Calu3 (cell line): ENCODE measurements at regions of chr21 and their contacts with region 1.

Region 1: GRCh38 chr21:34889716-34890469 is 159.2 kb downstream of the RUNX1 start:
- DNase-seq: peak; percentile 84
- H3K4me3 Mint-ChIP-seq: peak overlapping the region; percentile 65
- H3K27ac Mint-ChIP-seq: peak overlapping the region; percentile 66
- H3K4me1 Mint-ChIP-seq: no peaks in the 10 kb centered on the region
- H3K27me3 Mint-ChIP-seq: no peaks in the 10 kb centered on the region
- CTCF ChIP-seq: peak; percentile 63

Region 2: DNA sequence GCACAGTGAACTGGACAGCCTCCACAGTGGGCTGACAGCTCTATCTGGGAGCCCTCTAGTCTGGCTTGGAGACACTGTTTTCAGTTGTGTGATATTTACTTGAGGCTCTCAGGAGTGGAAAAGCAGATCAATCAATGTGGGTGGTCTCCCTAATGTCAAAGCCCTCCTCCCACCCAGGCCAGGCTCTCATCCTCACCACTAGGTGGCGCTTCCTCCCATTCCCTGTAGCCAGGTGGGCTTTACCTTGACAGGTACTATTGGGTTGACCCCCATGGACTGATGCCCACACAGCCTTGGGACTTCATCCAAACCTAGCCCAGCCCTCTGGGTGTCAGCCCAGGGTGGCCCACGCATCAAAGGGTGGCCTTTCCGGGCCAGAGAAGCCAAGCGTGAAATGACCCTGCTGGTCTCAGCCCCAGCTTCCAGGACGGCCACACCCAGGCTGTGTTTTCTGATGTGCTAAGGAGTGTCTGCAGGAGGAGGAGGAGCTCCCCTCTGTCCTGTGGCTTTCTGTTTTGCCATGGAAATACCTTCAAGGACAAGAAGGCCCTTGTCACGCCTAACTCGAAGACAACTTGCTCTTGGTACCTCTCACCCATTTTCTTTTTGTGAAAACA is 167.1 kb before region 1 on chr21:
- CTCF ChIA-PET with region 1: no interaction called
- intact Hi-C with region 1: no loop called
- DNase-seq: peak; percentile 17
- H3K4me3 Mint-ChIP-seq: no peak overlapping the region
- H3K27ac Mint-ChIP-seq: no peak overlapping the region
- H3K4me1 Mint-ChIP-seq: no peaks in the 10 kb centered on the region
- H3K27me3 Mint-ChIP-seq: no peaks in the 10 kb centered on the region
- CTCF ChIP-seq: peak; percentile 57

Region 3: DNA sequence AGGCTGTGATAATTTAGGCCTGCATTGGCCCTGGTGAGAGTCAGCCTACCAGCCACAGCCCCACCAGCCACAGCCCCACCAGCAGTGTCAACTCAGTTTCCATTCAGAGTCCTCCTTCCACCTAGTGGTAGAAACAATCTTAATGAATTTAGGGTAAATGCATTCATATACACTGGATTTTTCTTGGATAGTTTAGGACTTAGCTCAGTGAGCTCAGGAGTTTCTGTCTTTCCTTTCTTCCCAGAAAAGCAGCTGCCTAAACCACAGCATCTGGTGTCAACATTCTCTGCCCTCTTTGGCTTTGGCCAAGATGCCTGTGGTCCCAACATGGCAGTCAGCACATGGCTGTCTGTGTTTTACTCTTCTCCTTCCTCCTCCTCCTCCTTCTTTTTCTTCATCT is 127.1 kb before region 1 on chr21:
- CTCF ChIA-PET with region 1: no interaction called
- intact Hi-C with region 1: no loop called
- DNase-seq: no peak
- H3K4me3 Mint-ChIP-seq: no peak overlapping the region
- H3K27ac Mint-ChIP-seq: no peak overlapping the region
- H3K4me1 Mint-ChIP-seq: no peaks in the 10 kb centered on the region
- H3K27me3 Mint-ChIP-seq: no peaks in the 10 kb centered on the region
- CTCF ChIP-seq: no peak

Region 4: DNA sequence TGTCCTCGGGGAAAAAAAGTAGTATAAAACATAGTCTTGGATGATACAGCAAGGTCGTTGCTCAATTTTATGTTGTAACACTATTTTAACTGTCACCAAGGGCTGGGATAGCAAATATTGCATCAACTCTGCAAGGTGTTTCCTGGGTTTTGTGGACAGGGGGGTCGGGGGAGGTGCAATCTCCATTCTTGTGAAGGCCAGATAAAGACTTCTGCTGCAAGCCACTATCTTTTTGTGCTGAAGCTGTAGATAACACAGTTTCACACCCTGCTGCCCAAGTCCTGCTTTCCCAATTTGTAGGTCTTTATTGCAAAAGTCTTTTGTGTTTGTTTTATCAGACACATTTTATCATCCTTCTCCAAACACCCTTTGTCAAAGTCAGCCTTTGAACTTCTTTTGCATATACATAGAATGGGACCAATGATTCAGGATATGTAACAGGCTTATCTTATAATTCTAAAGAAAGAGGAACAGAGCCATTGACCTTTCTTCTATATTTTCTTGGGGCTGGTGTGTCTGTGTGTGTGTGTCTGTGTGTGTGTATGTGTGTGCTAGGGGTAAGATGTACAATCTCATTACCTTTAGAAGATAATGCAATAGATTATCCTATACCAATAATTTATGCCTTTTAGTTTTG is 18.6 kb after region 1 on chr21:
- CTCF ChIA-PET with region 1: no interaction called
- intact Hi-C with region 1: no loop called
- DNase-seq: peak; percentile 13
- H3K4me3 Mint-ChIP-seq: no peak overlapping the region
- H3K27ac Mint-ChIP-seq: no peak overlapping the region
- H3K4me1 Mint-ChIP-seq: peaks cover 26% of the 10 kb centered on the region
- H3K27me3 Mint-ChIP-seq: no peaks in the 10 kb centered on the region
- CTCF ChIP-seq: no peak

Region 5: GRCh38 chr21:35138665-35139381 is 248.9 kb after region 1 on chr21:
- CTCF ChIA-PET with region 1: interaction called, 7 read pairs
- intact Hi-C with region 1: loop called (anchors 5 kb)
- DNase-seq: peak; percentile 78
- H3K4me3 Mint-ChIP-seq: no peak overlapping the region
- H3K27ac Mint-ChIP-seq: peak overlapping the region; percentile 95
- H3K4me1 Mint-ChIP-seq: peaks cover 39% of the 10 kb centered on the region
- H3K27me3 Mint-ChIP-seq: no peaks in the 10 kb centered on the region
- CTCF ChIP-seq: no peak

Region 6: GRCh38 chr21:35217504-35218060 is 327.7 kb after region 1 on chr21:
- CTCF ChIA-PET with region 1: no interaction called
- intact Hi-C with region 1: loop called (anchors 10 kb)
- DNase-seq: peak; percentile 79
- H3K4me3 Mint-ChIP-seq: no peak overlapping the region
- H3K27ac Mint-ChIP-seq: peak overlapping the region; percentile 95
- H3K4me1 Mint-ChIP-seq: peaks cover 46% of the 10 kb centered on the region
- H3K27me3 Mint-ChIP-seq: no peaks in the 10 kb centered on the region
- CTCF ChIP-seq: no peak

Region 7: DNA sequence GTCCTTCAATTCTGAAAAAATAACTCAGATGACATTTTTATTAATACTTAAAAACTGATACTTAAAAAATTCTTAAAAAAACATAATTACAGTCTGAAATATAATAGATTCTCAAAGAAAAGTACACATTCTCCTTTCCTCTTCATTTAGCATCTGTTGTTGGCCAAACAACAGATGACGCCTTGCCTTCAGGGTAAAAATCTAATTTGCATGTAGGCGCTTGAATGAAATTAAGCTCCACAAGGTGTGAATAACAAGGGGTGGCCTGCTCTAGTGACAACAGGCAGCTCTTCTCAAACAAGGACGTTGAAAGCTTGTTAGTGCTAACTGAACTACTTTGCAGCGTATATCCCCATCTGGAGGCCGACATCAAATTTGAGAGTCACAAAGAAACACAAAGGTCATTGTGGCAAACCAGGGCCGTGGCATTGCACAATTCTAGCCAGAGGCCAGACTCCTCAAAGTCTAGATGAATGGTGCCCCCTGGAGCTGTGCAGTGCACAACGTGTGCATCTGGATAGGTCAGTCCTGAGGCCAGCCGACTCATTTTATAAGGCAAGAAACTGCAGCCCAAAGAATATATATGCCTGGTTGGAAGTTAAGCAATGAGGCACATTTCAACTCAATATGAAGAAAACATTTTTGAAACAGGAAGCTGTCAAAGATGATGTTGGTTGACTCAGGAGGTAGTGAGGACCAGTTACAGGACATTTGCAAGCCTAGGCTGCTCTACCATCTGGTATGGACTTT is 618.4 kb after region 1 on chr21:
- CTCF ChIA-PET with region 1: interaction called, 11 read pairs
- intact Hi-C with region 1: loop called (anchors 5 kb)
- DNase-seq: peak; percentile 68
- H3K4me3 Mint-ChIP-seq: no peak overlapping the region
- H3K27ac Mint-ChIP-seq: no peak overlapping the region
- H3K4me1 Mint-ChIP-seq: peaks cover 47% of the 10 kb centered on the region
- H3K27me3 Mint-ChIP-seq: no peaks in the 10 kb centered on the region
- CTCF ChIP-seq: peak; percentile 25